RWPE1 (cell line): ENCODE measurements at regions of chr6 and their contacts with region 1.

Region 1: GRCh38 chr6:37442416-37443215 is 9.6 kb downstream of the CMTR1 start:
- DNase-seq: no peak
- H3K27ac ChIP-seq: no peak overlapping the region
- CTCF ChIP-seq: no peak

Region 2: DNA sequence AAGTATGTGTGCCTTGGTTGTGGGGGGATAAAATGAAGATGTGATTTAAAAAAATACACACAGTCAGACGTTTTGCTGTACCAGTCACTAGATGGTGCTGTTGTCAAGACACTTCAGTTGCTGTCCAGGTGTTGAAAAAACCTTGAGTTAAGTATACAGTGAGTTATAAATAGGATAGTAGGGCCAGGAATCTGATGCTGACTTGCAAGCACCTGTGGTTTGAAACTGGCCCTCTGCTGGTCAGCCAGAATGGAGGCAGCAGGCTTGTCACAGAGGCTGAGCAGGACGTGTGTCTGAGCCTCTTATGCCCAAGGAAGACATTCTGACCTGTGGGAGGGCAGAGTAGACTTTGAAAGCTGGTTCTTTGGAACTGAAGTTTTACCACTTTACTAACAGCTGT is 61.0 kb before region 1 on chr6:
- CTCF ChIA-PET with region 1: no interaction called
- POLR2A ChIA-PET with region 1: interaction called, 11 read pairs
- DNase-seq: peak; percentile 54
- H3K27ac ChIP-seq: no peak overlapping the region
- CTCF ChIP-seq: peak; percentile 73